GM12878 (cell line): ENCODE measurements at regions of chr1 and their contacts with region 1.

Region 1: GRCh38 chr1:161792740-161793139 is 26.6 kb downstream of the ATF6 start:
- DNase-seq: peak; percentile 23
- ATAC-seq: peak; percentile 90
- H3K4me3 ChIP-seq: no peak overlapping the region
- H3K27ac ChIP-seq: no peak overlapping the region
- H3K4me1 ChIP-seq: no peaks in the 10 kb centered on the region
- H3K27me3 ChIP-seq: no peaks in the 10 kb centered on the region
- CTCF ChIP-seq: peak; percentile 42 to 61 (median 49); a peak in 5 of 6 replicates
- EP300 ChIP-seq: no peak
- POLR2A ChIP-seq: no peak
- RAD21 ChIP-seq: peak; percentile 73

Region 2: GRCh38 chr1:160844447-160845232 is 948.1 kb before region 1 on chr1:
- CTCF ChIA-PET with region 1: no interaction called
- POLR2A ChIA-PET with region 1: no interaction called
- RAD21 ChIA-PET with region 1: no interaction called
- SMC1A ChIA-PET with region 1: no interaction called
- in situ Hi-C with region 1: no loop called
- intact Hi-C with region 1: no loop called
- DNase-seq: no peak
- ATAC-seq: no peak; the same call in 2 of the 3 replicates
- H3K4me3 ChIP-seq: no peak overlapping the region
- H3K27ac ChIP-seq: no peak overlapping the region
- H3K4me1 ChIP-seq: no peaks in the 10 kb centered on the region
- H3K27me3 ChIP-seq: no peaks in the 10 kb centered on the region
- CTCF ChIP-seq: no peak
- EP300 ChIP-seq: no peak
- POLR2A ChIP-seq: no peak
- RAD21 ChIP-seq: no peak

Region 3: DNA sequence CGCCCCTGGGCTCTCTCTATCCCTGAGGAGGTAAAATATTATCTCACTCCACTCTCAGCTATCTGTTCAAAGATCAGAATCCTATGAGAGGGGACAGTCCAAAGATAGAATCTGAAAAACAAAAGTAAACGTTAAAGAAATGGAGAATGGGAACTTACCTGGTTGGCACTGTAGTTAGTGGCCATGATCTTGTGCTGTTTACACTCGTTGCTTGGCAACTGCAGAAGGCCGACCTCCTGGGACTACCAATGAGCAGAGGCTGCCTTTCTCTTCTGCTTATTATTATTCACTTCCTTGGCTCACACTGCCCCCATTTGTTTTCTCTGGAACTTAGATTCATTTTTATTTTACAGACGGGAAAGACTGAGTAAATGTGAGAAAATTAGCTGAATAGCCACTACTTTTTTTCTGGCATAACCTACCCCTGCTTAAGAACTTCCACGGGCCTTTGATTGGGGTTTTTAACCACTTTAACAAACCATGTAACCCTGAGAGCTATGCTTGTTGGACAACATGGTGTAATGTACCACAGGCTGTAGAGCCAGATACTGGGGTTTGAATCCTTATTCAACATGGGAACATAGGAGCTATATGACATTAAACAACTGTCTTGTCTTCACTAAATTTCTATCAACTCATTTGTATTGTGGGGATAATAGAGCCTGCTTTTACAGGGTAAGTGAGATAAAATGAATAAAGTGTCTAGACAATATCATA is 424.9 kb before region 1 on chr1 and contains the start of gene CFAP126:
- CTCF ChIA-PET with region 1: no interaction called
- POLR2A ChIA-PET with region 1: no interaction called
- RAD21 ChIA-PET with region 1: no interaction called
- SMC1A ChIA-PET with region 1: no interaction called
- in situ Hi-C with region 1: no loop called
- intact Hi-C with region 1: no loop called
- DNase-seq: peak; percentile 35
- ATAC-seq: peak; percentile 100
- H3K4me3 ChIP-seq: no peak within 1 kb of the TSS
- H3K27ac ChIP-seq: no peak within 1 kb of the TSS; the same call in 1 of the 2 replicates
- H3K4me1 ChIP-seq: no peaks in the 10 kb centered on the region; the same call in 1 of the 2 replicates
- H3K27me3 ChIP-seq: no peaks in the 10 kb centered on the region
- CTCF ChIP-seq: peak in 2 of 3 experiments; percentile 19 to 49; a peak in 2 of 6 replicates
- EP300 ChIP-seq: no peak
- POLR2A ChIP-seq: no peak
- RAD21 ChIP-seq: peak; percentile 48
- polyA plus RNA-seq, gene CFAP126: not detected

Region 4: GRCh38 chr1:161838362-161838761 is 45.6 kb after region 1 on chr1:
- CTCF ChIA-PET with region 1: interaction called, 10 read pairs
- POLR2A ChIA-PET with region 1: no interaction called
- RAD21 ChIA-PET with region 1: interaction called, 3 read pairs
- SMC1A ChIA-PET with region 1: interaction called, 3 read pairs
- in situ Hi-C with region 1: no loop called
- intact Hi-C with region 1: no loop called
- DNase-seq: no peak
- ATAC-seq: no peak
- H3K4me3 ChIP-seq: no peak overlapping the region
- H3K27ac ChIP-seq: no peak overlapping the region
- H3K4me1 ChIP-seq: no peaks in the 10 kb centered on the region
- H3K27me3 ChIP-seq: no peaks in the 10 kb centered on the region
- CTCF ChIP-seq: no peak
- EP300 ChIP-seq: no peak
- POLR2A ChIP-seq: no peak
- RAD21 ChIP-seq: no peak

Region 5: DNA sequence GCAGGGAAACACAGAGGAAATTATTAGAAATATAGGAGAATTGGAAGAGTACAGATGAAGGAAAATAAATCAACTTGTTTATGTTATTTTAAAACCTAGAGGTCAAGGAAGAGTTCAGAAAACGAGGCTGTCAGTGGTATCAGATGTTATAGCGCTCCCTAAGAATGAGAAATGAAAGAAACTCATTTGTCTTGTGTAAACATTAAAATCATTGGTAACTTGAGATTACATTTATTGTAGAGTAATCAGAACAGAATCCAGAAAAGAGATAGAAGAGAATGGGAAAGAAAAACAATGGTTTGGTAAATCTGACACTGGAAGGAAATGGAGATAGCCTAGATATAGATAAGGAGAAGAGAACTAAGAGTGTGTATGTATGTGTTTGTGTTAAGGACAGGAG is 79.8 kb after region 1 on chr1:
- CTCF ChIA-PET with region 1: interaction called, 10 read pairs
- POLR2A ChIA-PET with region 1: no interaction called
- RAD21 ChIA-PET with region 1: no interaction called
- SMC1A ChIA-PET with region 1: no interaction called
- in situ Hi-C with region 1: no loop called
- intact Hi-C with region 1: no loop called
- DNase-seq: no peak
- ATAC-seq: no peak
- H3K4me3 ChIP-seq: no peak overlapping the region
- H3K27ac ChIP-seq: no peak overlapping the region
- H3K4me1 ChIP-seq: no peaks in the 10 kb centered on the region
- H3K27me3 ChIP-seq: no peaks in the 10 kb centered on the region
- CTCF ChIP-seq: no peak
- EP300 ChIP-seq: no peak
- POLR2A ChIP-seq: no peak
- RAD21 ChIP-seq: no peak

Region 6: GRCh38 chr1:161905269-161905884 is 112.6 kb after region 1 on chr1:
- CTCF ChIA-PET with region 1: interaction called, 30 read pairs
- POLR2A ChIA-PET with region 1: no interaction called
- RAD21 ChIA-PET with region 1: interaction called, 7 read pairs
- SMC1A ChIA-PET with region 1: interaction called, 3 read pairs
- in situ Hi-C with region 1: no loop called
- intact Hi-C with region 1: loop called (anchors 10 kb)
- DNase-seq: no peak
- ATAC-seq: peak; percentile 91
- H3K4me3 ChIP-seq: no peak overlapping the region
- H3K27ac ChIP-seq: no peak overlapping the region
- H3K4me1 ChIP-seq: 0 out of 2 replicates have a peak, but pooled peaks cover 4% of the 10 kb centered on the region
- H3K27me3 ChIP-seq: no peaks in the 10 kb centered on the region
- CTCF ChIP-seq: peak; percentile 45 to 68 (median 53)
- EP300 ChIP-seq: no peak
- POLR2A ChIP-seq: no peak
- RAD21 ChIP-seq: peak; percentile 49

Region 7: DNA sequence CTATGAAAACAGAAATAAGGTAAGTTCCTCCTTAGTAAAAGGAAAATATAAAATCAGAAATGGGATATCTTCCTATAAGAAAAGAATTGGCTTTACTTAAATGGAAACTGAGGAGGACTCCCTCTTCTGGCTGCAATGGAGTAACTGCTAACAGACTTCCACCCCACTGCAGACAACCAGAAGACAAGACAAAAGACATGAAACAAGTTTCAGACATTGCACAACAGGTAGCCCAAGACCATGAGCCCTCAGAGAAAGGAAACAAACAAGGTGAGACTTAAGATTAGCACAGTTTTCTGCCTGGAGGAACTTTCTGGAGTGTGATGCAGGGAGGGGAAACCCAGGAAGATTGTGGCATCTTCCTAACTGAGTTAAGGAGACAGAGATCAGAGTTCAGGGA is 247.9 kb after region 1 on chr1:
- CTCF ChIA-PET with region 1: interaction called, 214 read pairs
- POLR2A ChIA-PET with region 1: interaction called, 7 read pairs
- RAD21 ChIA-PET with region 1: interaction called, 152 read pairs
- SMC1A ChIA-PET with region 1: interaction called, 132 read pairs
- in situ Hi-C with region 1: loop called (anchors 5 kb)
- intact Hi-C with region 1: loop called (anchors 2 kb)
- DNase-seq: no peak
- ATAC-seq: peak; percentile 32; the same call in 1 of the 3 replicates
- H3K4me3 ChIP-seq: no peak overlapping the region
- H3K27ac ChIP-seq: no peak overlapping the region
- H3K4me1 ChIP-seq: no peaks in the 10 kb centered on the region
- H3K27me3 ChIP-seq: no peaks in the 10 kb centered on the region
- CTCF ChIP-seq: peak; percentile 24 to 36 (median 30); a peak in 3 of 6 replicates
- EP300 ChIP-seq: no peak
- POLR2A ChIP-seq: no peak
- RAD21 ChIP-seq: no peak

Region 8: GRCh38 chr1:162854245-162854882 is 1061.6 kb after region 1 on chr1:
- CTCF ChIA-PET with region 1: no interaction called
- POLR2A ChIA-PET with region 1: no interaction called
- RAD21 ChIA-PET with region 1: no interaction called
- SMC1A ChIA-PET with region 1: no interaction called
- in situ Hi-C with region 1: no loop called
- intact Hi-C with region 1: no loop called
- DNase-seq: no peak
- ATAC-seq: peak; percentile 94
- H3K4me3 ChIP-seq: no peak overlapping the region
- H3K27ac ChIP-seq: no peak overlapping the region
- H3K4me1 ChIP-seq: no peaks in the 10 kb centered on the region
- H3K27me3 ChIP-seq: 0 out of 4 replicates have a peak, but pooled peaks cover 0 to 1% of the 10 kb centered on the region in 2 experiments
- CTCF ChIP-seq: peak; percentile 70 to 81 (median 72)
- EP300 ChIP-seq: no peak
- POLR2A ChIP-seq: no peak
- RAD21 ChIP-seq: peak; percentile 67